T-cell (primary cell): ENCODE measurements at regions of chr4 and their contacts with region 1.

Region 1: GRCh38 chr4:37603070-37603468 is 83.1 kb downstream of the RELL1 start:
- DNase-seq: peak; percentile 30 to 81 (median 65)
- ATAC-seq: peak; percentile 70 to 81 (median 75)
- H3K4me3 ChIP-seq: no peak overlapping the region
- H3K4me3 Mint-ChIP-seq: no peak overlapping the region
- H3K27ac ChIP-seq: no peak overlapping the region
- H3K27ac Mint-ChIP-seq: no peak overlapping the region
- H3K4me1 ChIP-seq: peaks cover 0 to 6% of the 10 kb centered on the region in 2 experiments
- H3K4me1 Mint-ChIP-seq: peaks cover 6 to 23% (median 11%) of the 10 kb centered on the region in 3 donors
- H3K27me3 ChIP-seq: no peaks in the 10 kb centered on the region
- H3K27me3 Mint-ChIP-seq: no peaks in the 10 kb centered on the region

Region 2: GRCh38 chr4:37561803-37562207 is 41.3 kb before region 1 on chr4:
- CTCF ChIA-PET with region 1: no interaction called
- POLR2A ChIA-PET with region 1: no interaction called
- DNase-seq: no peak
- ATAC-seq: no peak
- H3K4me3 ChIP-seq: no peak overlapping the region
- H3K4me3 Mint-ChIP-seq: no peak overlapping the region
- H3K27ac ChIP-seq: no peak overlapping the region
- H3K27ac Mint-ChIP-seq: no peak overlapping the region
- H3K4me1 ChIP-seq: no peaks in the 10 kb centered on the region
- H3K4me1 Mint-ChIP-seq: no peaks in the 10 kb centered on the region
- H3K27me3 ChIP-seq: peaks cover 0 to 4% of the 10 kb centered on the region in 2 experiments
- H3K27me3 Mint-ChIP-seq: peaks cover 0 to 2% of the 10 kb centered on the region in 2 donors

Region 3: GRCh38 chr4:37757121-37757520 is 154.1 kb after region 1 on chr4:
- CTCF ChIA-PET with region 1: no interaction called
- POLR2A ChIA-PET with region 1: interaction called in 1 of 2 experiments, 19 read pairs
- DNase-seq: no peak
- ATAC-seq: no peak
- H3K4me3 ChIP-seq: no peak overlapping the region
- H3K4me3 Mint-ChIP-seq: no peak overlapping the region
- H3K27ac ChIP-seq: no peak overlapping the region
- H3K27ac Mint-ChIP-seq: no peak overlapping the region
- H3K4me1 ChIP-seq: peaks cover 5 to 24% of the 10 kb centered on the region in 2 experiments
- H3K4me1 Mint-ChIP-seq: peaks cover 16 to 19% (median 19%) of the 10 kb centered on the region in 3 donors
- H3K27me3 ChIP-seq: peaks cover 0 to 4% of the 10 kb centered on the region in 2 experiments
- H3K27me3 Mint-ChIP-seq: peaks cover 0 to 8% of the 10 kb centered on the region in 2 donors

Region 4: GRCh38 chr4:37780444-37781150 is 177.5 kb after region 1 on chr4:
- CTCF ChIA-PET with region 1: interaction called, 7 to 10 read pairs
- POLR2A ChIA-PET with region 1: interaction called in 1 of 2 experiments, 3 read pairs
- DNase-seq: peak; percentile 40 to 86 (median 68)
- ATAC-seq: peak; percentile 97 to 100 (median 99)
- H3K4me3 ChIP-seq: no peak overlapping the region
- H3K4me3 Mint-ChIP-seq: peak overlapping the region in 1 of 3 donors; percentile 73
- H3K27ac ChIP-seq: peak overlapping the region; percentile 48
- H3K27ac Mint-ChIP-seq: peak overlapping the region; percentile 94 to 97
- H3K4me1 ChIP-seq: peaks cover 18 to 22% of the 10 kb centered on the region in 2 experiments
- H3K4me1 Mint-ChIP-seq: peaks cover 24 to 28% (median 26%) of the 10 kb centered on the region in 3 donors
- H3K27me3 ChIP-seq: no peaks in the 10 kb centered on the region
- H3K27me3 Mint-ChIP-seq: no peaks in the 10 kb centered on the region

Region 5: GRCh38 chr4:37793562-37793961 is 190.5 kb after region 1 on chr4:
- CTCF ChIA-PET with region 1: interaction called, 5 to 11 read pairs
- POLR2A ChIA-PET with region 1: no interaction called
- DNase-seq: peak in 19 of 35 experiments; percentile 2 to 59 (median 16)
- ATAC-seq: peak in 2 of 4 experiments; percentile 56 to 78
- H3K4me3 ChIP-seq: no peak overlapping the region
- H3K4me3 Mint-ChIP-seq: no peak overlapping the region
- H3K27ac ChIP-seq: no peak overlapping the region
- H3K27ac Mint-ChIP-seq: no peak overlapping the region
- H3K4me1 ChIP-seq: no peaks in the 10 kb centered on the region
- H3K4me1 Mint-ChIP-seq: no peaks in the 10 kb centered on the region
- H3K27me3 ChIP-seq: peaks cover 0 to 8% of the 10 kb centered on the region in 2 experiments
- H3K27me3 Mint-ChIP-seq: peaks cover 0 to 3% of the 10 kb centered on the region in 2 donors